HepG2 (cell line): ENCODE measurements at regions of chr6 and their contacts with region 1.

Region 1: DNA sequence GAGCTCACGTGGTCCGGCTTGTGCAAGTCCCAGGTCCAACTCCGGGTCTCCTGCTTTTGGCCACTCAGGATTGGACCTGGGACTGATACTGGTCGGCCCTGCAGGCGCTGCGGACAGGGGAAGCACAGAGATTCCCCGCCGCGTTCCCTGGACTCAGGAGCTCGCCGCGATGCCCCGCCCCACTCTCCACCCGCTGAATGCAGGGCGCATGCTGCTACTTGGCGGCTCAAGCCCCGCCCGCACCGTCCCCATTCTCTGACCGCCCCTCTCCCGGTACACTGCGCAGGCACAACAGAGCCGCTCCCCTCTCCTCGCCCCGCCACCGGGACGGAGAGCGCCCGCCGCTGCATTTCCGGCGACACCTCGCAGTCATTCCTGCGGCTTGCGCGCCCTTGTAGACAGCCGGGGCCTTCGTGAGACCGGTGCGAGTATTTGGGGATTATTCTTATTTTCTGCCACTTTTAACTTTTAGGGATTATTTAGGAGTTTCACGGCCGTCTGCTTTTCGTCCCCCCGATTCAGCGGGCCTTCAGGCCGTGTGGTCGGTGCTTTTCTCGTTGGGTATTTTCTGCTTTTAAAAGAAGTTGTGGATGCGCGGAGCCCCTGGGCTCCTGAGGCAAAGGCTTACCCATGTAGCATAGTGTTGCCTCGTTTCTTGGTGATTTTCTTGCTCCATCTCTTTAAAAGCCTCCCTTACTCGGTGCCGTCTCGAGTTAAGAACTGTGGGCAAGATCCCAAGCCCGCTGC is at the start of gene TMEM14C:
- DNase-seq: peak; percentile 99
- ATAC-seq: peak; percentile 92
- H3K4me3 ChIP-seq: peak within 1 kb of the TSS; percentile 69 to 92 (median 78)
- H3K27ac ChIP-seq: peak within 1 kb of the TSS; percentile 95
- H3K4me1 ChIP-seq: peaks cover 34% of the 10 kb centered on the region
- H3K27me3 ChIP-seq: no peaks in the 10 kb centered on the region
- CTCF ChIP-seq: peak; percentile 44
- EP300 ChIP-seq: peak in 1 of 2 experiments; percentile 58; a peak in 2 of 4 replicates
- POLR2A ChIP-seq: peak in 1 of 2 experiments; percentile 88; a peak in 3 of 4 replicates
- RAD21 ChIP-seq: no peak
- total RNA-seq, gene TMEM14C: 163 and 184 TPM in 2 replicates

Region 2: DNA sequence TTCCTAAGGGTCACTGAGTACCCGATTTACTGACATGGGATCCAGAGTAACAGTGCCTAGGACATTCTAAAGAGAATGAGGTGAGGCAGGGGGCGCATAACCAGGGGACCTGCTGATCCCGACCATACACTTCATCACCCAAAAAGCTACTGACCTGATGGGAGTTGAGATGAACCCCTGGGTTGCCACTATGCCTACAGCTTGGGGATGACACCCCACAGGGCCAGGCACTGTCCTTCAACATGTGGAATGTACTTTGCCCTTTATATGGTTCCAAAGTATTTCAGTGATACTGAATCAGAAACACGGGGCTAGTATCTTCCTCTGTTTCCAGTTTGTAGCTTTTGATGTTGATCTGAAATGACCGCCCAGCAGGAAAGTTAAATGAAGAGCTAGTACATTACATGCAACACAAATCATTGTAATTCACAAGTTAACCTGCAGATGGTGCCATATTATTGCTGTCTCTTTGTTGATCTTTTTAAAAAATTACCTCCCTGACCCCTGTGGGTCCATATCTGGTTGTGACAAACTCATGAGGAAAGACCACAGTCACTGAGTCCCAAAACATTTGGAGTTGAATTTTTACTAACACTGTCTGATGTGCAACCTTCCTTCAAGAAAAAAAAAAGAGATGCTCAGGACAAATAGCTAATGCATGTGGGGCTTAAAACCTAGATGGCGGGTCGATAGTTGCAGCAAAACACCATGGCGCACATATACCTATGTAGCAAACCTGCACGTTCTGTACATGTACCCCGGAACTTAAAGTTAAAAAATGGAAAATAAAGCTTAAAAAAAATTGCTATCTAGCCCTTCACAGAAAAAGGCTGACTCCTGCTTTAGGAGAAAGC is 244.6 kb before region 1 on chr6:
- CTCF ChIA-PET with region 1: no interaction called
- POLR2A ChIA-PET with region 1: interaction called, 14 read pairs
- in situ Hi-C with region 1: no loop called
- intact Hi-C with region 1: loop called (anchors 1 kb)
- DNase-seq: peak; percentile 58
- ATAC-seq: peak; percentile 67
- H3K4me3 ChIP-seq: no peak overlapping the region
- H3K27ac ChIP-seq: no peak overlapping the region
- H3K4me1 ChIP-seq: no peaks in the 10 kb centered on the region
- H3K27me3 ChIP-seq: peaks cover 0 to 7% of the 10 kb centered on the region in 2 experiments; a peak in 1 of 5 replicates
- CTCF ChIP-seq: peak; percentile 78
- EP300 ChIP-seq: no peak
- POLR2A ChIP-seq: no peak
- RAD21 ChIP-seq: peak; percentile 54; the same call in 1 of the 2 replicates

Region 3: DNA sequence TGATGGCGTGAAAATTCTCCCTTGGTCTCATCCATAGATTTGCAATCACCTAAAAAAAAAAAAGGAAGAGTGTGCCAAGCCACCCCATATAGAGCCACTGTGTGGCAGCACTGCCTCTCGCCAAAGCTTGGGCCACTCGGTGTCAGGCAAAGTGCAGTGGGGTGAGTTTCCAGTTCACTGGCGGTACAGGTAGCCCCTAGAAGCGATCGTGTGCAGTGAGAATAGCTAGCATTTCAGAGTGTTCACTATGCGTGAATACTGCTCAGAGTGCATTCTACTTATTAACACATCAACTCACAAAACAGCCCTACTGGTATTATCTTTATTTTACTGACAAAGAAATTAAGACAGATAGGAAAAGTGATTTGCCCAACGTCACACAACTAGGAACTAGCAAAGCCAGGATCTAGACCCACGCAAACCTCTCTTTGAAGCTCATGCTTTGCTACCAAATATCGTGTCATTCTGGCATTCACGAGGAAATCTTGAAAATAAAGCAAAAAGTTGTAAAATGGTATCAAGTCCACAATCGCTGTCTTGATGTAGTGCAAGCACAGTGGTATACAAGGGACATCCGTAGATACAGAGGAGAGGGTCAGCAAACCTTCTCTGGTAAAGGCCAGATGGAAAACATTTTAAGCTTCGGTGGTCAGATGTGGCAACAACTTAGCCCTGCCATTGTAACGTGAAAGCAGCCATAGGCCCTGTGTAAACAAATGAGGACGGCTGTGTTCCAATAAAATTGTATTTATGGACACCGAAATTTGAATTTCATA is 212.2 kb before region 1 on chr6:
- CTCF ChIA-PET with region 1: no interaction called
- POLR2A ChIA-PET with region 1: interaction called, 32 read pairs
- in situ Hi-C with region 1: no loop called
- intact Hi-C with region 1: loop called (anchors 1 kb)
- DNase-seq: peak; percentile 76
- ATAC-seq: peak; percentile 95
- H3K4me3 ChIP-seq: peak overlapping the region; percentile 29 to 58 (median 35); a peak in 5 of 6 replicates
- H3K27ac ChIP-seq: no peak overlapping the region
- H3K4me1 ChIP-seq: peaks cover 26% of the 10 kb centered on the region
- H3K27me3 ChIP-seq: peaks cover 0 to 4% of the 10 kb centered on the region in 2 experiments; a peak in 1 of 5 replicates
- CTCF ChIP-seq: peak; percentile 95
- EP300 ChIP-seq: no peak
- POLR2A ChIP-seq: no peak
- RAD21 ChIP-seq: peak; percentile 81

Region 4: GRCh38 chr6:10528170-10528981 is 194.6 kb before region 1 on chr6:
- CTCF ChIA-PET with region 1: no interaction called
- POLR2A ChIA-PET with region 1: interaction called, 17 read pairs
- in situ Hi-C with region 1: no loop called
- intact Hi-C with region 1: no loop called
- DNase-seq: peak; percentile 94
- ATAC-seq: peak; percentile 92
- H3K4me3 ChIP-seq: peak overlapping the region; percentile 72 to 79 (median 73)
- H3K27ac ChIP-seq: peak overlapping the region; percentile 90
- H3K4me1 ChIP-seq: peaks cover 40% of the 10 kb centered on the region
- H3K27me3 ChIP-seq: no peaks in the 10 kb centered on the region; a peak in 1 of 5 replicates
- CTCF ChIP-seq: no peak
- EP300 ChIP-seq: peak; percentile 48 to 64; a peak in 3 of 4 replicates
- POLR2A ChIP-seq: peak; percentile 63 to 96
- RAD21 ChIP-seq: no peak; the same call in 1 of the 2 replicates

Region 5: DNA sequence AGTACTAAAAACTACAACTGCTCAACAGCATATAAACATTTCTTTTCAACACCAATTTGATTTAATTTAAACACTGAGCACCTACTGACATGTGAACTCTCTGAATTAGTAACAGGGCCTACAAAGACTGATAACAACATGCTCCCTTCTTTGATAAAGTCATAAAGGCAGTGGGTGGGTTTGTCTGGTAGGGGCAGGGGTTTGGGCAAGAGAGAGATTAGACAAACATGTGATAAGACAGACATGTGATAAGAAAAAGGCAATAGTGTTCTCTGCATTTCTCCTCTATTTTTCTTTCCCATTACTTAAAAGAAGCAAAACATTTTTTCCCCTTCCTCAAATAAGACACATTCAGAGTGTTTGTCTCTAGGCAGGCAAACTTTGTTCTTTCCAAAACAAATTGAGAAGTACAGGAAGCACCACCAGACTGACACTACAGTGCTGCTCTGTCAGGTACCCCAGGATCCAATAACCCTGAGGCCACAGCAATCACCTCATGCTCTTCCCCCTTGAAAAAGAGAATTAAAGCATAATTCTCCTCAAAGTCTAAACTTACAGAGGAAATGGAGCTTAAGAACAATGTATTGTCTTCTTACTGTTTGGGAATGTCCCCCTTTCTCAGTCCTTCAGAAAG is 40.5 kb before region 1 on chr6:
- CTCF ChIA-PET with region 1: no interaction called
- POLR2A ChIA-PET with region 1: no interaction called
- in situ Hi-C with region 1: no loop called
- intact Hi-C with region 1: no loop called
- DNase-seq: no peak
- ATAC-seq: no peak
- H3K4me3 ChIP-seq: no peak overlapping the region
- H3K27ac ChIP-seq: no peak overlapping the region
- H3K4me1 ChIP-seq: no peaks in the 10 kb centered on the region
- H3K27me3 ChIP-seq: peaks cover 3 to 11% of the 10 kb centered on the region in 2 experiments; a peak in 3 of 5 replicates
- CTCF ChIP-seq: no peak
- EP300 ChIP-seq: no peak
- POLR2A ChIP-seq: no peak
- RAD21 ChIP-seq: no peak

Region 6: GRCh38 chr6:10733151-10733715 is 10.2 kb after region 1 on chr6:
- CTCF ChIA-PET with region 1: no interaction called
- POLR2A ChIA-PET with region 1: interaction called, 71 read pairs
- in situ Hi-C with region 1: no loop called
- intact Hi-C with region 1: no loop called
- DNase-seq: no peak
- ATAC-seq: peak; percentile 36; the same call in 2 of the 3 replicates
- H3K4me3 ChIP-seq: no peak overlapping the region
- H3K27ac ChIP-seq: no peak overlapping the region
- H3K4me1 ChIP-seq: peaks cover 11% of the 10 kb centered on the region
- H3K27me3 ChIP-seq: no peaks in the 10 kb centered on the region
- CTCF ChIP-seq: no peak
- EP300 ChIP-seq: no peak
- POLR2A ChIP-seq: no peak
- RAD21 ChIP-seq: no peak

Region 7: GRCh38 chr6:10759312-10759839 is 36.4 kb after region 1 on chr6:
- CTCF ChIA-PET with region 1: no interaction called
- POLR2A ChIA-PET with region 1: interaction called, 27 read pairs
- in situ Hi-C with region 1: no loop called
- intact Hi-C with region 1: loop called (anchors 1 kb)
- DNase-seq: peak; percentile 88
- ATAC-seq: peak; percentile 88
- H3K4me3 ChIP-seq: no peak overlapping the region
- H3K27ac ChIP-seq: peak overlapping the region; percentile 5
- H3K4me1 ChIP-seq: peaks cover 26% of the 10 kb centered on the region
- H3K27me3 ChIP-seq: no peaks in the 10 kb centered on the region
- CTCF ChIP-seq: peak; percentile 33
- EP300 ChIP-seq: no peak
- POLR2A ChIP-seq: no peak
- RAD21 ChIP-seq: no peak

Region 8: DNA sequence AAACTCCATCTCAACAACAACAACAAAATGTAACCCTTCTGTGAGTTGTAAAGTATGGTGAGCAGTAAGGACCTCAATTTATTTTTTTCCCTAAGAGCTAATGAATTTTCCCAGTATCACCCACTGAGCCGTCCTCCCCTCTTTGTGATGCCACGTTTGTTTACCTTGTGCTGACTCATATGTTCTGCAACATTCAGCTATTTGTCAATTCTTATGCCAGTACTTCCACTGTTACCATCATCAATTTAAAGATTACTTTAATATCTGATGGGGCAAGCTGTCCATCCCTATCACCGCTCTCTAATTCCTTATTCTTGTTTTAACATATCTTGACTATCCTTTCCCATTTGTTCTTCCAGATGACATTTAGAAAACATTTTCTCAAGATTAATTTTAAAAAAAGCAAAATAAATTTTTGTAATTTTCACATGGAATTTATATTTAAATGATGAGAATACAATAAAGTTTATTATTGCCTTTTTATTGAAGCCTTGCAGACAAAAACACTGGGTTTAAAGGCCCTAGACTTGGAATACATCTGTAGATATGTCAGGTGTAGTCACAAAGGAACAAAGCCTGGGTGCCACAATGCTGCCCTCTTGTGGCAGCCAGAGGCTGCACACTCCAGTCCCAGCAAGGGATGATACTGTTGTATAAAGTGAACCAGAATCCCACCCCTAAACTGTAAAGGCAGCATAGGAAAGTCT is 78.0 kb after region 1 on chr6:
- CTCF ChIA-PET with region 1: no interaction called
- POLR2A ChIA-PET with region 1: interaction called, 11 read pairs
- in situ Hi-C with region 1: no loop called
- intact Hi-C with region 1: loop called (anchors 1 kb)
- DNase-seq: peak; percentile 68
- ATAC-seq: peak; percentile 100
- H3K4me3 ChIP-seq: no peak overlapping the region
- H3K27ac ChIP-seq: no peak overlapping the region
- H3K4me1 ChIP-seq: peaks cover 7% of the 10 kb centered on the region; the same call in 1 of the 2 replicates
- H3K27me3 ChIP-seq: no peaks in the 10 kb centered on the region
- CTCF ChIP-seq: peak; percentile 95
- EP300 ChIP-seq: no peak
- POLR2A ChIP-seq: no peak
- RAD21 ChIP-seq: peak; percentile 87